HCT116 (cell line): ENCODE measurements at regions of chr2 and their contacts with region 1.

Region 1: DNA sequence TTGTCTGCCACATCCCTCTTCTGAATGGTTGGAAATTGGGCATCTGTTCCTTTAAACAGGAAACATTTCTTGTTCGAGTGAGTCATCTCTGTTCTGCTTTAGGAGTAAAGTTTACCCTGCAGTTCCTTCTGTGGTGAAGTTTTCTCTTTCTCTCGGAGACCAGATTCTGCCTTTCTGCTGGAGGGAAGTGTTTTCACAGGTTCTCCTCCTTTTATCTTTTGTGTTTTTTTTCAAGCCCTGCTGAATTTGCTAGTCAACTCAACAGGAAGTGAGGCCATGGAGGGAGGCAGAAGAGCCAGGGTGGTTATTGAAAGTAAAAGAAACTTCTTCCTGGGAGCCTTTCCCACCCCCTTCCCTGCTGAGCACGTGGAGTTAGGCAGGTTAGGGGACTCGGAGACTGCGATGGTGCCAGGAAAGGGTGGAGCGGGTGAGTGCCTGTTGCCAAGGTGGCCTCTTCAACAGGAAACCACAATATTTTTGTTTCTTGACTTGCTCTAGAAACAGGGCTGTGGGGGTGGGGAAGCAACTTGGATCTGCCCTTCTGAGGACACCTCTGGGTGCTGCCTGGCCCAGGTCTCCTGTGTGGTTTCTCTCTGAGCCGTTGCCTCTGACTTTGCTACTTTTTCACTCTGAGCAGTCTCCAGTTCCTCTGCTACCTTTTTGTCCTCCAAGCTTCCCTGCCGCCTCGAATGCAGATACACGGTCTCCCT is 2.2 kb upstream of the CASP8 start:
- DNase-seq: peak; percentile 68
- ATAC-seq: peak; percentile 75
- H3K4me3 ChIP-seq: peak overlapping the region; percentile 61 to 64
- H3K27ac ChIP-seq: peak overlapping the region; percentile 76
- H3K4me1 ChIP-seq: peaks cover 23 to 55% of the 10 kb centered on the region in 2 experiments
- H3K27me3 ChIP-seq: no peaks in the 10 kb centered on the region
- CTCF ChIP-seq: 0 out of 6 replicates have a peak, but pooled peaks of 1 of the 3 experiments have one; percentile 1
- POLR2A ChIP-seq: peak; percentile 54
- RAD21 ChIP-seq: peak; percentile 30

Region 2: GRCh38 chr2:201343559-201343958 is 85.4 kb after region 1 on chr2:
- CTCF ChIA-PET with region 1: no interaction called
- POLR2A ChIA-PET with region 1: no interaction called
- RAD21 ChIA-PET with region 1: no interaction called
- intact Hi-C with region 1: no loop called
- DNase-seq: no peak
- ATAC-seq: no peak
- H3K4me3 ChIP-seq: no peak overlapping the region
- H3K27ac ChIP-seq: no peak overlapping the region
- H3K4me1 ChIP-seq: no peaks in the 10 kb centered on the region; a peak in 2 of 4 replicates
- H3K27me3 ChIP-seq: no peaks in the 10 kb centered on the region
- CTCF ChIP-seq: no peak
- POLR2A ChIP-seq: no peak
- RAD21 ChIP-seq: no peak

Region 3: GRCh38 chr2:201357241-201357640 is 99.1 kb after region 1 on chr2 and contains the start of gene FLACC1:
- CTCF ChIA-PET with region 1: no interaction called
- POLR2A ChIA-PET with region 1: no interaction called
- RAD21 ChIA-PET with region 1: no interaction called
- intact Hi-C with region 1: loop called (anchors 5 kb)
- DNase-seq: peak; percentile 42
- ATAC-seq: no peak; the same call in 1 of the 2 replicates
- H3K4me3 ChIP-seq: no peak within 1 kb of the TSS
- H3K27ac ChIP-seq: no peak within 1 kb of the TSS
- H3K4me1 ChIP-seq: peaks cover 18 to 36% of the 10 kb centered on the region in 2 experiments
- H3K27me3 ChIP-seq: no peaks in the 10 kb centered on the region
- CTCF ChIP-seq: no peak
- POLR2A ChIP-seq: no peak
- RAD21 ChIP-seq: no peak
- total RNA-seq, gene FLACC1: 0.74 TPM

Region 4: DNA sequence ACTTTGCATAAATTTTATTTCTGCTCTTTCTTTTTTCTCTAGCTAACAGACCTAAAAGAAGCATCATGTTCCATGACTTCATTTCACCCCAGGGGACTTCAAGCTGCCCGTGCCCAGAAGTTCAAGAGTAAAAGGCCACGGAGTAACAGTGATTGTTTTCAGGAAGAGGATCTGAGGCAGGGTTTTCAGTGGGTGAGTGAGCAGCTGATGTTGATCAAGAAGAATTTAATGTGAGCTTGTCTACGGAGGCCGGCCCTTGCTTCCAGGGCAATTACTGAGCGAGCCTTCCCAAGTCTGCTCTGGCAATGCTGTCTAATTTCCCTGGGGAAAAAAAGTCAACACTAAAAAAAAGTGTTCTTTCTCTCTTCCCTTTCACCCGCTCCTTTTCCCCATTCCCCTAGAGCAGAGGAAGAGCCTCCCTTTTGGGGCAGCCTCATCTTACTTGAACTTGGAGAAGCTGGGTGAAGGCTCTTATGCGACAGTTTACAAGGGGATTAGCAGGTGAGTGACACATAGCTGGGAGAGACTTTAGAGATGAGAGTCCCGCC is 549.4 kb after region 1 on chr2:
- CTCF ChIA-PET with region 1: no interaction called
- POLR2A ChIA-PET with region 1: no interaction called
- RAD21 ChIA-PET with region 1: no interaction called
- intact Hi-C with region 1: no loop called
- DNase-seq: no peak
- ATAC-seq: no peak
- H3K4me3 ChIP-seq: no peak overlapping the region
- H3K27ac ChIP-seq: no peak overlapping the region
- H3K4me1 ChIP-seq: no peaks in the 10 kb centered on the region
- H3K27me3 ChIP-seq: no peaks in the 10 kb centered on the region
- CTCF ChIP-seq: no peak
- POLR2A ChIP-seq: no peak
- RAD21 ChIP-seq: no peak